Spleen (tissue), 13 donors: ENCODE measurements at regions of chr11 and their contacts with region 1.

Region 1: DNA sequence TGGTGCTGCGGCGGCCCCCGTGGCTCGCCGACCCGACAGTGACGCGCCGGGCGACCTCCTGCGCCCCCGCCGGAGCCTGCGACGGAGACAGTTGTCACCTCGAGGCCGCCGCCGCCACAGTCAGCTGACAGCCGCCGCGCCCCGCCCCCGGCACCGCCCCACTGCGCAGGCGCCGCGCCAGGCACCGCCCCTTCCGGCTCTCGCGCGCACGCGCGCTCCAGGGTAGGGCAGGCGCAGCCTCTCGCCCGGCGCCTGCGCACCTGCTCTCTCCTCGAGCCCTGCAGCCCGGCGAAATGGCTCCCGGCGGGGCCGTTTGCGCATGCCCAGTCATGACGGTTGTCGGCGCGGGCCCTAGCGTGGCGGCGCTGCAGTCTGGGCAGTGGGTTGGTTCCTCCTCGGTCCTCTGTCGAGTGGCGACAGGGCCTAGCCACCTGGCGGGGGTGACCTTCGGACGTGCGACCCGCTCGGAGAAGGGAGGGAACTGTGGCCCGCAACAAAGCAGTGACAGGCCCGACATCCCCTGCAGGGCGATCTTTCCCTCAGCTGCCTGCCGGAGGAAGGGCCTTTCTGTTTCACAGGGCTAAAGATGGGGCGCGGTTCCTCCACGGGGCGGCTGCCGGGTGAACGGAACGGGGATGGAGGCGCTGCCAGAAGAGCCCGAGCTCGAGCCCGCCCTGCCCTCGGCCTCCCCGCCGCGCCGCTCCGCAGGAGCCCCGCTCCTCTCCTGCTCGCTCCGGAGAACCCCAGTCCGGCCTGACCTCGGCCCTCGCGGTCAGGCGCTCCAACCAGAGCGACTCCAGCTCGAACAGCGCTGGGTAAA is at the start of gene TOLLIP:
- DNase-seq: peak; percentile 99
- H3K4me3 ChIP-seq: peak within 1 kb of the TSS; percentile 75 to 91 (median 80)
- H3K27ac ChIP-seq: peak within 1 kb of the TSS; percentile 94 to 98 (median 96)
- H3K4me1 ChIP-seq: peaks cover 32 to 65% (median 59%) of the 10 kb centered on the region in 6 donors
- H3K27me3 ChIP-seq: no peaks in the 10 kb centered on the region
- CTCF ChIP-seq: peak in 6 of 11 experiments; percentile 20 to 39 (median 29)
- POLR2A ChIP-seq: peak in 2 of 3 donors; percentile 33 to 55
- total RNA-seq, gene TOLLIP: 44.3 to 67.4 (median 59.8) TPM

Region 2: DNA sequence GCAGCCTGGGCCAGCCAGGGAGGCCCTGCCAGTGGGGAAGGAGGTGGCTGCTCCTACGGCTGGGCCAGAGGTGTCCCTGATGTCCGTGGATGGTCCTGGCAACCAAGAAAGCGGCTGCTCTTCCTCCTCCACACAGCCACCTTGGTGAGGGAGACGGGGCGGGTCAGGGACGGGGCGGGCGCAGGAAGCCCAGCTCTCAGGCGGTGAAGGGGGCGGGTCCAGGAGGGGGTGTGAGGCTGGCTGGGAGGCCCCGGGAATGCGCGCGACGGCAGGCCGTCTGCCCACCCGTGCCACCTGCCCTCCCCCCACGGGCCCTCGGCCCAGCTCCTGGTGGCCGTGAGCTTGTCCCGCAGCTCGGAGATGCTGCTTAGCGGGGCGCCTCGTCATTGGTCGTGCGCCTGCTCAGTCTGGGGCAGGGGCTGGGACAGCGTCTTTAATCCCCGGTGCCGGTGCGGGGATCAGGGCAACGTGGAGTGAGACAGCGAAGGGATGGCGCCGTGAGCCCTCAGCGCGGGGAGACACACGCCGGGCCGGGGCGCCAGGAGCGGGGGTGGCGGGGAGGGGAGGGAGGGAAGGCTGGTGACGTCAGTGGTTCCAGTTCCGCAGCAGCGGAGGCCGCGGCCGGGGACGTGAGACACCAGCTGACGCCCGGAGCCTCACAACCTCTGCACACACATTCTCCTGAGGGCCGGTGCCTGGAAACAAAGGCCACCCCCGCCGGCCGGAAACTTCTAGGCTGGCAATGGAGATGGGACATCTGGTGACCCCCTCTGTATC is 73.3 kb after region 1 on chr11:
- intact Hi-C with region 1: loop called (anchors 5 kb)
- DNase-seq: peak; percentile 96
- H3K4me3 ChIP-seq: peak overlapping the region; percentile 45 to 78 (median 52)
- H3K27ac ChIP-seq: peak overlapping the region; percentile 86 to 97 (median 89)
- H3K4me1 ChIP-seq: peaks cover 0 to 29% (median 14%) of the 10 kb centered on the region in 6 donors
- H3K27me3 ChIP-seq: peaks cover 0 to 20% (median 0%) of the 10 kb centered on the region in 7 donors
- CTCF ChIP-seq: peak in 4 of 11 experiments; percentile 24 to 35 (median 28)
- POLR2A ChIP-seq: no peak

Region 3: GRCh38 chr11:1521382-1522080 is 211.8 kb after region 1 on chr11:
- intact Hi-C with region 1: loop called (anchors 10 kb)
- DNase-seq: peak; percentile 87
- H3K4me3 ChIP-seq: no peak overlapping the region
- H3K27ac ChIP-seq: peak overlapping the region in 1 of 8 donors; percentile 13
- H3K4me1 ChIP-seq: peaks cover 16 to 98% (median 62%) of the 10 kb centered on the region in 6 donors
- H3K27me3 ChIP-seq: no peaks in the 10 kb centered on the region
- CTCF ChIP-seq: peak in 1 of 11 experiments; percentile 15
- POLR2A ChIP-seq: no peak